ENCODE measurements at regions of chr17 and their contacts with region 1.

Region 1: GRCh38 chr17:49132699-49133364 is at the start of gene B4GALNT2:
- DNase-seq: no peak
- H3K4me3 ChIP-seq: peak within 1 kb of the TSS; percentile 3 to 57 (median 39)
- H3K27ac ChIP-seq: no peak within 1 kb of the TSS
- H3K4me1 ChIP-seq: no peaks in the 10 kb centered on the region
- H3K27me3 ChIP-seq: peaks cover 6 to 39% of the 10 kb centered on the region in 2 donors
- CTCF ChIP-seq: no peak
- POLR2A ChIP-seq: no peak
- total RNA-seq, gene B4GALNT2: 0.15 to 0.66 TPM in 2 of 3 donors, not detected in the other

Region 2: DNA sequence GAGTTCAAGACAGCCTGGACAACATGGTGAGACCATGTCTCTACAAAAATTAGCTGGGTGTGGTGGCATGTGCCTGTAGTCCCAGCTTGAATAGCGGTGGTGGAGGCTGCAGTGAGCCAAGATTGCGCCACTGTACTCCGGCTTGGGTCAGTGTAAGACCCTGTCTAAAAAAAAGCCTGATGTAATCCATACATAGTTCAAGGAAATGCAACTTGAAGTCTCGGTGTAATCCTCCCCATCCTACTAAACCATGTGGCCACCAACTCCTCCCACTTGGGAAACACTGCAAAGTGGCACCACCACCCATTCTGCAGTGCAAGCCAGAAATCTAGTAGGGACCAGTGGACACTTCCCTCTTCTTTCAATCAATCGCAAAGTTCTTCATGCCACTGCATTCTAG is 1488.5 kb before region 1 on chr17:
- intact Hi-C with region 1: no loop called
- DNase-seq: no peak
- H3K4me3 ChIP-seq: no peak overlapping the region
- H3K27ac ChIP-seq: no peak overlapping the region
- H3K4me1 ChIP-seq: no peaks in the 10 kb centered on the region
- H3K27me3 ChIP-seq: no peaks in the 10 kb centered on the region
- CTCF ChIP-seq: no peak
- POLR2A ChIP-seq: no peak

Region 3: DNA sequence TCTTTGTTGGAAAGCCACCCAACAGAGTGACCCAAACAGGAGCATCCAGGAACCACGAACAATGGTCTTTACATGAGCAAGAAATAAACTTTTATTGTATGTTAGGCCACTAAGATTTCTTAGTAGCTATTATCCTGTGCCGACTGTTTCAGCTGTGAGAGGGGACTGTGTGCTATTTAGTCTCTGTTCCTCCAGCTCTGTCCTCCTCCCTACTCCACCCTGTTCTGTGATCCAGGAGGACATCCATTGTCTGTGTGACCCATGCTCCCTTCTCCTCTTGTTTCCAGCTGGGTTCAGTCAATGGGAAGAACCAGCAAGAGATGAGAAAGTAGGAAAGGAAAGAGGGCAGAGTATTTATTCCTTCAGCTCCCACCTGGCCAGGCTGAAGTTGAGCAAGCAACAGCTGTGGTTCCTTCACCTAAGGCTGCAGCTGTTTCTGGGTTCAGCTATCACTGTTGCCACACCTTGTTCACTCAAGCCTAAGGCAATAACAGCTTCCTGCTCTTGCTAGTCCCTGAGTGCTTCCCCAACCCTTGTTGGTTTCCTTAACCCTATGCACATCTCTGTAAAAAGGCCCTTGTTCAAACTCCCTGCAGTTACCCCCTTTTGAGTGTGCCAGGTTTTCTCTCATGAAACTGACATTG is 15.1 kb before region 1 on chr17:
- intact Hi-C with region 1: no loop called
- DNase-seq: no peak
- H3K4me3 ChIP-seq: no peak overlapping the region
- H3K27ac ChIP-seq: no peak overlapping the region
- H3K4me1 ChIP-seq: no peaks in the 10 kb centered on the region
- H3K27me3 ChIP-seq: no peaks in the 10 kb centered on the region
- CTCF ChIP-seq: no peak
- POLR2A ChIP-seq: no peak

Region 4: GRCh38 chr17:49157784-49158183 is 25.0 kb after region 1 on chr17:
- intact Hi-C with region 1: loop called (anchors 1 kb)
- DNase-seq: no peak
- H3K4me3 ChIP-seq: no peak overlapping the region
- H3K27ac ChIP-seq: no peak overlapping the region
- H3K4me1 ChIP-seq: no peaks in the 10 kb centered on the region
- H3K27me3 ChIP-seq: peaks cover 0 to 28% of the 10 kb centered on the region in 2 donors
- CTCF ChIP-seq: no peak
- POLR2A ChIP-seq: no peak

Region 5: GRCh38 chr17:49201481-49201927 is 68.7 kb after region 1 on chr17:
- intact Hi-C with region 1: no loop called
- DNase-seq: no peak
- H3K4me3 ChIP-seq: no peak overlapping the region
- H3K27ac ChIP-seq: no peak overlapping the region
- H3K4me1 ChIP-seq: no peaks in the 10 kb centered on the region
- H3K27me3 ChIP-seq: no peaks in the 10 kb centered on the region
- CTCF ChIP-seq: no peak
- POLR2A ChIP-seq: no peak

Measured in breast epithelium (tissue), 4 donors.